ENCODE measurements at regions of chr16 and their contacts with region 1.

Region 1: DNA sequence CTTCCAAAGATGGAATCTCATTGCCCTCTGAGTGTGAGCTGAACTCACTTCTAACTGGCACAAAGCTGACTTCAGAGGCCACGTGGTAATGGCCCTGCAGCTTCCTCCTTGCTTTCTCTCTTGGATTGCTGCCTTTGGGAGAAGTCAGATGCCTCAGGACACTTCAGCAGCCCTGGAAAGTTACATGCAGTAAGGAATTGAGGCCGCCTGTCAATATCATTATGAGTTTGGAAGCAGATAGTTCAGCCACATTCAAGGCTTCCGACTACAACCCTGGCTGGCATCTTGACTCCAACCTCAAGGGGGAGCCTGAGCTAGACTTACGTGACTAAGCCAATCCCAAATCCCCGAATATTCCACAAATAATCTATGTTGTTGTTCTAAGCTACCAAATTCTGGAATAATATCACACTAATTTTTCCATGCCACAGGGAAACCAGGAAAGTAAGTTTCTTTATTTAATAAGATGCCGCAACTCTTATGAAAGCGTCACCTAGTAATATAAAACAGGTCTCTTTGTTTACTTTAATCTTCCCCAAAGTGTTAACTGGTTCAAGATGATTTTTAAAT is 13.6 kb downstream of the CEP20 start:
- DNase-seq: no peak
- ATAC-seq: peak; percentile 65
- H3K4me3 ChIP-seq: no peak overlapping the region
- H3K27ac ChIP-seq: no peak overlapping the region
- H3K4me1 ChIP-seq: peaks cover 3% of the 10 kb centered on the region; the same call in 1 of the 2 replicates
- H3K27me3 ChIP-seq: no peaks in the 10 kb centered on the region
- CTCF ChIP-seq: peak; percentile 54 to 73 (median 61)
- EP300 ChIP-seq: no peak
- POLR2A ChIP-seq: no peak
- RAD21 ChIP-seq: peak; percentile 56

Region 2: GRCh38 chr16:15830832-15831451 is 43.9 kb before region 1 on chr16:
- CTCF ChIA-PET with region 1: no interaction called
- POLR2A ChIA-PET with region 1: no interaction called
- RAD21 ChIA-PET with region 1: no interaction called
- SMC1A ChIA-PET with region 1: no interaction called
- in situ Hi-C with region 1: no loop called
- intact Hi-C with region 1: no loop called
- DNase-seq: no peak
- ATAC-seq: no peak
- H3K4me3 ChIP-seq: no peak overlapping the region
- H3K27ac ChIP-seq: no peak overlapping the region
- H3K4me1 ChIP-seq: peaks cover 3% of the 10 kb centered on the region; the same call in 1 of the 2 replicates
- H3K27me3 ChIP-seq: no peaks in the 10 kb centered on the region
- CTCF ChIP-seq: no peak
- EP300 ChIP-seq: no peak
- POLR2A ChIP-seq: no peak
- RAD21 ChIP-seq: no peak

Region 3: GRCh38 chr16:15899538-15900100 is 24.8 kb after region 1 on chr16:
- CTCF ChIA-PET with region 1: interaction called, 10 read pairs
- POLR2A ChIA-PET with region 1: no interaction called
- RAD21 ChIA-PET with region 1: interaction called, 4 read pairs
- SMC1A ChIA-PET with region 1: interaction called, 4 read pairs
- in situ Hi-C with region 1: no loop called
- intact Hi-C with region 1: no loop called
- DNase-seq: peak; percentile 65
- ATAC-seq: peak; percentile 84
- H3K4me3 ChIP-seq: no peak overlapping the region
- H3K27ac ChIP-seq: peak overlapping the region; percentile 41
- H3K4me1 ChIP-seq: peaks cover 37% of the 10 kb centered on the region
- H3K27me3 ChIP-seq: no peaks in the 10 kb centered on the region
- CTCF ChIP-seq: no peak
- EP300 ChIP-seq: 0 out of 4 replicates have a peak, but pooled peaks have one; percentile 15 to 49
- POLR2A ChIP-seq: no peak
- RAD21 ChIP-seq: no peak

Region 4: DNA sequence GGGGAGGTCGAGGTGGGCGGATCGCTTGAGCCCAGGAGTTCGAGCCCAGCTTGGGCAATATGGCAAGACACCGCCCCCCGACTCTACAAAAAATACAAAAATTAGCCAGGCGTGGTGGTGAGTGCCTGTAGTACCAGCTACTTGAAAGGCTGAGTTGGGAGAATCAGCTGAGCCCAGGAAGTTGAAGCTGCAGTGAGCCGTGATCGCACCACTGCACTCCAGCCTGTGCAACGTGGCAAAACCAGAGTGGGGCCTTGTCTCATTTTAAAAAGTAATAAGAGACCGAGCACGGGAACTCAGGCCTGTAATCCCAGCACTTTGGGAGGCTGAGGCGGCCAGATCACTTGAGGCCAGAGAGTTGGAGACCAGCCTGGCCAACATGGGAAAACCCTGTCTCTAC is 50.2 kb after region 1 on chr16:
- CTCF ChIA-PET with region 1: no interaction called
- POLR2A ChIA-PET with region 1: no interaction called
- RAD21 ChIA-PET with region 1: no interaction called
- SMC1A ChIA-PET with region 1: no interaction called
- in situ Hi-C with region 1: no loop called
- intact Hi-C with region 1: no loop called
- DNase-seq: no peak
- ATAC-seq: no peak
- H3K4me3 ChIP-seq: no peak overlapping the region
- H3K27ac ChIP-seq: no peak overlapping the region
- H3K4me1 ChIP-seq: no peaks in the 10 kb centered on the region
- H3K27me3 ChIP-seq: no peaks in the 10 kb centered on the region
- CTCF ChIP-seq: no peak
- EP300 ChIP-seq: no peak
- POLR2A ChIP-seq: no peak
- RAD21 ChIP-seq: no peak

Region 5: DNA sequence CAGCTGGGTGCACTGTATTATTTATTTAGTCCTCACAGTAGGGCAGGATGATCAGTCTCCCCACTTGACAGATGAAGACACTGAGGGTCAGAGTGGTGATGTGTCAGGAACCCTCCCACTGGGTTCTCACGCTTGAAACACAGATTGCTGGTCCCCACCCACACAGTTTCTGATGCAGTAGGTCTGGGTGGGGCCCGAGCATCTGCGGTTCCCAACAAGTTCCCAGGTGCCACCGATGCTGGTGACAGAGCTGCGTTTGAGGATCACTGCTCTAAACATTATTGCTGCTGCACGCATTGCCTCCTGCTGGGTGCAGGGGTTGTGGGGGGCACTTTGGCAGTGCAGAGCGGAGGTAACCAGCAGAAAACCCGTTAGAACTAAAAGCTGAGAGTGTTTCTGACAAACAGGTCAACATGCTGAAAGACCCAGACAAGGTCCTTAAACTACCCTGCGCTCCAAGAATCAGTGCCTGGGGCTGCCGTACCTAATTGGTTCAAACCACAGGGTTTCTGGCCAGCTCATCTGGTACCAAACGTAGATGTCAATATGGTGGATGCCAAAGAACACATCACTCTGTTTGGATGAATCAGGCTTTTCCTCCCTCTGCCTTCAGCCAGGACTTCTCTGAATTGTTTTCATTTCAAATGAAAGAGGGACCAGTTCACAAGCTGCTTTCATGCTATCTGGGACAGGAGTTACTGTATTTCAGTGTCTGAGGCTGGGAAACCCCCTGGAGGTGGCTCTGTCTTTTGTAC is 150.6 kb after region 1 on chr16:
- CTCF ChIA-PET with region 1: interaction called, 10 read pairs
- POLR2A ChIA-PET with region 1: no interaction called
- RAD21 ChIA-PET with region 1: interaction called, 5 read pairs
- SMC1A ChIA-PET with region 1: interaction called, 3 read pairs
- in situ Hi-C with region 1: no loop called
- intact Hi-C with region 1: loop called (anchors 10 kb)
- DNase-seq: no peak
- ATAC-seq: peak; percentile 86
- H3K4me3 ChIP-seq: no peak overlapping the region
- H3K27ac ChIP-seq: peak overlapping the region; percentile 57
- H3K4me1 ChIP-seq: peaks cover 17% of the 10 kb centered on the region
- H3K27me3 ChIP-seq: no peaks in the 10 kb centered on the region
- CTCF ChIP-seq: no peak
- EP300 ChIP-seq: no peak
- POLR2A ChIP-seq: 0 out of 2 replicates have a peak, but pooled peaks have one; percentile 16
- RAD21 ChIP-seq: peak; percentile 4; the same call in 1 of the 2 replicates

Region 6: DNA sequence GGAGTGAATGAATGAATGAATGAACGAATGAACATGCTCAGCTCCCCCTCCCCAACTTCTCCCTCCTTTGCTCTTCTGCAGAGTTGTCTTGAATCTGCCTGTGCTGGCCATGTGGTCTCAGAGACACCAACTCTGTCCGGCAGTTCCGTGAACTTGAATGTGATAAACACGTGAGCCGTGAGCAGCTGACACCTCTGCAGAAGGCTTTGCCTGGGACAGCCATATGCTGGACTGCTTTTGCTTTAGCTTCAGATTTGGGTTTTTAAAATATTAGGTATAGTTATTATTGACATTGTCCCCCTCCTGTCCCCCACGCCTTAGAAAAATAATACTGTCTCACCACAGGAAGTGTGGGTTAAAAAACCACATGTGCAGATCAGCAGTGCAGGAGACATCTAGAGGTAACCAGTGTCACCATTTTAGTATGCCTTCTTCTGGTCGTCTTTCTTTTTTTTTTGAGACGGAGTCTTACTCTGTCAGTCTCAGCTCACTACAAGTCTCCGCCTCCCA is 158.4 kb after region 1 on chr16:
- CTCF ChIA-PET with region 1: interaction called, 5 read pairs
- POLR2A ChIA-PET with region 1: no interaction called
- RAD21 ChIA-PET with region 1: interaction called, 5 read pairs
- SMC1A ChIA-PET with region 1: interaction called, 10 read pairs
- in situ Hi-C with region 1: no loop called
- intact Hi-C with region 1: loop called (anchors 10 kb)
- DNase-seq: no peak
- ATAC-seq: peak; percentile 46; the same call in 2 of the 3 replicates
- H3K4me3 ChIP-seq: no peak overlapping the region
- H3K27ac ChIP-seq: peak overlapping the region; percentile 33
- H3K4me1 ChIP-seq: peaks cover 10% of the 10 kb centered on the region
- H3K27me3 ChIP-seq: no peaks in the 10 kb centered on the region
- CTCF ChIP-seq: peak in 1 of 3 experiments; percentile 11; a peak in 1 of 6 replicates
- EP300 ChIP-seq: no peak
- POLR2A ChIP-seq: no peak
- RAD21 ChIP-seq: peak; percentile 33; the same call in 1 of the 2 replicates

Measured in GM12878 (cell line).